GM10248 (cell line): ENCODE measurements at regions of chr11 and their contacts with region 1.

Region 1: DNA sequence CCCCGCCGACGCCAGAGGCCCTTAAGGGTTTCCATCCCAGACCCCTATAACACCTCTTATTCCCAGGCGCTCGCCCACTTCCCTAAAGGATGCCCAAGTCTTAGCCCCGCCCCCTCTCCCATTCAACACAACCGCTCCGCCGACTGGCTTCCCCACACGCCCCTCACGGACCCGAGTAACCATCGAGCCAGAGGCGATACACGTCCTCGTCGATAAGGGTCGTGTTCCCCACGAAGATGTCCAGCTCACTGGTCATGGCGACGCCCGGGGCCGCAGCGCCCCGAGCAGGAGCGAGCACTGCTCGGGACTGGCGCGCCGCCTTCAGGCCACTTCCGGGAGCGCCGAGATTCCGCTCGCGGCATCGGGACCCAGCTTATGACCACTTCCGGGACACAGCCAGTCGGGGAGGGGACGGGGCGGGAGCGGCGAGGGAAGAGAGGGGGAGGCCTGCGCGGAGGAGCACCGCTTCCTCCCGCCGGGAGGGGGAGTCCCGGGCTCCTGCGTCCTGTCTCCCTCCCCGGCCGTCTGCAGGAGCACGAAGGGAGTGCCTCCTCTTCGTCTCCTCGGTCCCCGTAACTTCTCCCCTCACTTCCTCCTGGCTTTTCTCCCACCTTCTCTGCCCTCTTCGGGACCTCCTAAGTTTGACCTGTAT is at the start of gene FIBP:
- DNase-seq: peak; percentile 97
- CTCF ChIP-seq: peak; percentile 73

Region 2: GRCh38 chr11:65844231-65845190 is 43.8 kb before region 1 on chr11:
- CTCF ChIA-PET with region 1: interaction called, 29 read pairs
- POLR2A ChIA-PET with region 1: interaction called, 6 read pairs
- DNase-seq: no peak
- CTCF ChIP-seq: no peak

Region 3: DNA sequence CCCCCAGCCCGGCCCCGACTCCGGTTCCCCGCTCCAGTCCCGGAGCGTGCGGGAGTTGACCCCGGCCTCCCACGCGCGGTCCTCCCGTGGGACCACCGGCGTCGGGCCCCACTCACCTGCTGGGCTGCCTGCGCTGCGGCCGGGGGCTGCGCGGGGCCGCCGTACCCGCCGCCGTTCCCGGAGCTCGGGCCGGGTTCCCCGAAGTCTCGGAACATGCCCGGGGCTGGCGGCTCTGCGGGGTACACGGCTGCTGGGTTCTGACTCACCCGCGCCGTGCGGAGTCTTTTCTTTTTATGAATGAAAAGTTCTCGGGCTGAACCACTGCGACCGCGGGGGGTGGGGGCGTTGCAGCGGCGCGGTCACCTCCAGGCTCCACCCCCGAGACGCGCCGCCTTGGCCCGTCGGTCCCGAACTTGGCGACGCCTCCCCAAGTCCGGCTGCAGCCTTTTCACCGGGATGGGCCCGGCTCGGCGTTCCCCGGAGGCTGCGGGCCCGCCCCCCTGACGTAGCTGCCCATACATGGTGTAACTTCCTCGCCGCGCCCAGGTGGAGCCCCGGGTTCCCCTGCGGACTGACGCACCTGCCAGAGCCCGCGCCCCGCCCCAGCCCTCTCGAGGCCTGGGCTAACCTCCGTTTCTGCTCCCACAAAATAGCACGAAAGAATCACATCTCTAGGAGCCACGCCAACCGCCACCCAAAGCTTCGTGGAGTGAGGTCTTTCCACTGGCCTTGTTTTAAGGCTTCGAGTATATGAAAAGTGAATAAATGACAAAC is 12.0 kb after region 1 on chr11 and contains the start of gene FOSL1:
- CTCF ChIA-PET with region 1: interaction called, 199 read pairs
- POLR2A ChIA-PET with region 1: interaction called, 10 read pairs
- DNase-seq: peak; percentile 93
- CTCF ChIP-seq: no peak

Region 4: GRCh38 chr11:65921096-65921495 is 32.8 kb after region 1 on chr11:
- CTCF ChIA-PET with region 1: interaction called, 15 read pairs
- POLR2A ChIA-PET with region 1: interaction called, 4 read pairs
- DNase-seq: no peak
- CTCF ChIP-seq: no peak

Region 5: DNA sequence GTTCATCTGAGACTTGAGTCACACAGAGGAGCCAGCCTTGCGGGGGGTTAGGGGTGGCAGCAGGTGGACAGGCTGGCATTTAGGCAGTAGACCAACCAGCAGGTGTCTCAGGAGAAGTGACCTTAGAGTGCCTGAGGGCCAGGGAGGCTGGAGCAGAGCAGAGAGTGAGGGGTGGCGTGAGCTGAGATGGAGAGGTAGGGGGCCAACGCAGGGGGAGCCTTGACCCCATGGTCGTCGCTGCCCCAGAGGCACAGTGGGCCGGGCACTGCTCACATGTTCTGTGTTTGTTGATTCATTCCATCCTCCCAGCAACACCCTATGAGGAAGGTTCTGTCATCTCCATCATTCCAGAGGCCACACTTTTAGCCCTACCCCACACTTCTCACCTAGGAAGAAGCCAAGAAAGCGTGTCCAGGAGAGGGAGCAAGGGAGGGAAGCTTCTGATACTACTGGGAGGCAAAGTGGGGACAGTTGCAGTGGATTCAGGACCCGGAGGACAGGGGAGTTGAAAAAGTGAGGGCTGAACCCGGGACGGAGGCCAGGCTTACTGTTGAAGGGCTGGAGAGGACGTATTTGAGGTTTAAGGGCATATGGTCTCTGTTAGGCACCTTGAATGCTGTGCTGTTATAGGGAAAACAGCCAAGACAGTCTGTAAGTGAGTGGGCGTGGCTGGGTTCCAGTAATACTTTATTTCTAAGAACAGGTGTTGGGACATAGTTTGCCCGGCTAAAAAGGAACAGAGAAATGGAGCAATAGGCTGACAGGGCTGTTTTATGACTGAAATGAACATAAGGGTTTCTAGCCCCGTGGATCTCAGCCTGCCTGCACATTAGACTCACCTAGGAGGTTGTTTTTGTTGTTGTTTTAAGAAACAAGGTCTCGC is 80.6 kb after region 1 on chr11:
- CTCF ChIA-PET with region 1: interaction called, 25 read pairs
- POLR2A ChIA-PET with region 1: interaction called, 4 read pairs
- DNase-seq: no peak
- CTCF ChIP-seq: no peak

Region 6: DNA sequence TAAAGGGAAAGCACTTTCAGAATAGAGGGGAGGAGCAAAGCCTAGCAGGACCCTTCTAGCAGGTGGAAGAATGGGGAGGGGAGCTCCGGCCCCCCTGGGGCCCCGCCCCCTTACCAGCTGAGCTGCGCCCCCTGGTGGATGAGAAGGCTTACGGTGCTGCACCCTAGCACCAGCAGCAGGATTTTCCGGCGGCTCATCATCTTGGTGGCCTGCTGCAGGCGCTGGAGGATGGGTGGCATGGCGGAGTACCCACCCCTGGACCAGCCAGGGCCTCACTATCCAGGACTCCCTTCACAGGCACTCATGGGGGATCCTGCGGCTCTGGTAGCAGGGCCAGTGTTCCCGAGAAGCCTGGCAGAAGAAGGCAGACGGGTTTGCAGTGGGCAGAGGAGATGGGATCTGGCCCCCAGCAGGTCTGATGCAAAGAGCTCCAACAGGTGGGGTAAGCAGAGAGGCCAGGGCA is 156.9 kb after region 1 on chr11:
- CTCF ChIA-PET with region 1: interaction called, 27 read pairs
- POLR2A ChIA-PET with region 1: no interaction called
- DNase-seq: peak; percentile 91
- CTCF ChIP-seq: peak; percentile 92

Region 7: DNA sequence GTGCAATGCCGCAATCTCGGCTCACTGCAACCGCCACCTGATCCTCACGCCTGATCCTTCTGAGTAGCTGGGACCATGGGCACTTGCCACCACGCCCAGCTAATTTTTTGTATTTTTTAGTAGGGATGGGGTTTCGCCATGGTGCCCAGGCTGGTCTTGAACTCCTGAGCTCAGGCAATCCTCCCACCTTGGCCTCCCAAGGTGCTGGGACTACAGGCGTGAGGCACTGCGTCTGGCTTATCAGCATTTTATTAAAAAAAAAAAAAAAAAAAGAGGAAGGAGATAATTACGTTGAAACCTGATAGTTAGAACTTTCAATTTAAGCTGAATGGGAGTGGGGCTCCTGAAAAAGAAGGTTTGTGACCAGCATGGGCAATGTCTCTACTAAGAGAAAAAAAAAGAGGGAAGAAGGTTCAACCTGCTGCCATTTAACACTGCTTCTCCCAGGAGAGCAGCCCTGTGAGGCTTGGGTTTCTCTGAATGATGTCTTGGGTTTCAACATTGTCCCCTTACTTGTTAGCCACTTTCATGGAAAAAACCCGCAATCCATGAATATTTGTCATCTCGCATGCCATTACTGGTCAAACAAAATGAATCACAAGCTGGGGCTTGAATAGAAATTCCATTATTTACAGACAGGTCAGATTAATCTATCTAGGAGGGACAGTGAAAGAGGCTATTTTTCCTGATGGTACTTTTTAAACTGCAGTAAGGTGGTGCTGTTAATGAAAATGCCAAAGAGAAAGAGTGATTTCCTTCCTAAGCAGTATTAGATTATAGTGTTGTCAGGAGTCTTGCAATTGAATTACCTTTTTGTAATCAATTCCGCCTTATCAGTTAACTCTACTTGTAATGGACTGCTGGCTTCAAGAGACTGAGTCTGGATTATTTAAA is 254.3 kb after region 1 on chr11:
- CTCF ChIA-PET with region 1: no interaction called
- POLR2A ChIA-PET with region 1: no interaction called
- DNase-seq: no peak
- CTCF ChIP-seq: no peak

Region 8: GRCh38 chr11:66311965-66312548 is 423.8 kb after region 1 on chr11:
- CTCF ChIA-PET with region 1: no interaction called
- POLR2A ChIA-PET with region 1: no interaction called
- DNase-seq: peak; percentile 87
- CTCF ChIP-seq: peak; percentile 16